ENCODE measurements at regions of chr19 and their contacts with region 1.

Region 1: GRCh38 chr19:13033819-13034611 is 38.7 kb downstream of the NFIX start:
- DNase-seq: peak; percentile 84 to 91 (median 91)
- ATAC-seq: peak; percentile 18 to 64
- H3K4me3 ChIP-seq: no peak overlapping the region
- H3K27ac ChIP-seq: peak overlapping the region; percentile 80
- H3K4me1 ChIP-seq: peaks cover 64% of the 10 kb centered on the region
- H3K27me3 ChIP-seq: no peaks in the 10 kb centered on the region

Region 2: GRCh38 chr19:13069415-13070359 is 35.7 kb after region 1 on chr19:
- intact Hi-C with region 1: loop called in 1 of 4 experiments (anchors 5 kb)
- DNase-seq: peak in 2 of 3 donors; percentile 72
- ATAC-seq: peak; percentile 12 to 31
- H3K4me3 ChIP-seq: no peak overlapping the region
- H3K27ac ChIP-seq: peak overlapping the region; percentile 77
- H3K4me1 ChIP-seq: peaks cover 49% of the 10 kb centered on the region
- H3K27me3 ChIP-seq: no peaks in the 10 kb centered on the region

Region 3: GRCh38 chr19:13093407-13094105 is 59.5 kb after region 1 on chr19:
- intact Hi-C with region 1: no loop called
- DNase-seq: peak; percentile 86 to 94 (median 92)
- ATAC-seq: peak; percentile 60 to 64
- H3K4me3 ChIP-seq: no peak overlapping the region
- H3K27ac ChIP-seq: peak overlapping the region; percentile 59
- H3K4me1 ChIP-seq: no peaks in the 10 kb centered on the region
- H3K27me3 ChIP-seq: no peaks in the 10 kb centered on the region

Region 4: GRCh38 chr19:13150187-13150930 is 116.3 kb after region 1 on chr19 and contains the starts of genes IER2 and STX10:
- intact Hi-C with region 1: no loop called
- DNase-seq: peak; percentile 97 to 98 (median 98)
- ATAC-seq: peak; percentile 73 to 80
- H3K4me3 ChIP-seq: peak within 1 kb of the TSS; percentile 77
- H3K27ac ChIP-seq: peak within 1 kb of the TSS; percentile 99
- H3K4me1 ChIP-seq: peaks cover 4% of the 10 kb centered on the region
- H3K27me3 ChIP-seq: no peaks in the 10 kb centered on the region
- total RNA-seq, gene IER2: 22.2 to 53.5 (median 29.2) TPM
- total RNA-seq, gene STX10: 30.8 to 39.8 (median 37.2) TPM